ENCODE measurements at regions of chr6 and their contacts with region 1.

Region 1: DNA sequence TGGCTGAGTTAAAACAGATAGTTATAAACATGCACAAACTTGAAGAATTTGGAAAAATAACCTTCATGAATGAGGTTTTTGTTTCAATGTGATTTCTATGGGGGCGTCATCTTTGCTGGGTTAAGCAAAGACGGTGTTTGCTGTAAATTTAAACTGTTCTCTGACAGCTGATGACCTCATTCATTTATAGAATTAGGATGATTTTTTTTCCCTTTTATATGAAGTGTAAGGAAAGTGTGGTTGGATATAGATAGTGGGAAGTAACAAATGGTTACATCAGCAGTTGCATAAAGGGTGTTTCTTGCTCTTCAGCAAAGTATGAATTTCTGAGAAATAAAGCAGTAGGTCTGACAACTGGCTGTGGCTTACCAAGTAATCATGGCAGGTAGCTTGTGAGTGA is 137.2 kb upstream of the CENPW start:
- DNase-seq: no peak
- ATAC-seq: no peak
- H3K4me3 ChIP-seq: no peak overlapping the region
- H3K4me3 Mint-ChIP-seq: no peak overlapping the region
- H3K27ac ChIP-seq: no peak overlapping the region
- H3K27ac Mint-ChIP-seq: no peak overlapping the region
- H3K4me1 ChIP-seq: no peaks in the 10 kb centered on the region
- H3K4me1 Mint-ChIP-seq: no peaks in the 10 kb centered on the region
- H3K27me3 ChIP-seq: no peaks in the 10 kb centered on the region
- H3K27me3 Mint-ChIP-seq: no peaks in the 10 kb centered on the region
- CTCF ChIP-seq: no peak

Region 2: DNA sequence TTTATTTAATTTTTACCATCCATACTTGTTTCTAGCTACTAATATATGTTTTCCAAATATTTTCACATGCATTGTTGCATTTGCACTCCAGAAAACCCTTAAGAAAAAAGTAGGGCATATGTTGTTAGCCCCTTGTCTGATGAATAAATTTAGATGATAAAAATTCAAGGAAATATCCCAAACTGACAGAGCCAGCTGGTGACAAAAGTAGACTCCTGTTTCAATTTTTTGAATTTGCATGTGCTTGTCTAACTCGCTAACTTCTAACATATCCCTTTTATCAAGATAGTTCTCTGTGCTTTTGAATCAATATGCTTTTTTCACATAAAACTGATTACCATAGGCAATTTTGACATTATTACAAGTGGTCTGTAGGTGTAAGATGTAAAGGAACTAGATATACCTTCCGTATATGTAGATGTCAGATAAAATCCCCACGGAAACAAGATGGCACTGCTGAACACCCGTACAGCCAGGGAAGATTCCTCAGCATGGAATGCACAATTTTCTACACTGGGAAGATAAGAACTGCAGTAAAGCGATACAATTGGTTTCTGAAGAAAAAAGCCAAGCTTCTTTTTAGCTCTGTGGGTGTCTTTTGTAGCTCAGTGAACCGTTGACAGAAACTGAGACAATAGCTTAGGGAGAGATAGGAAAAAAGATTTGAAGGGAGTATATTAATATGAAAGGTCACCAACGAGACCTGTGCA is 1678.1 kb before region 1 on chr6:
- CTCF ChIA-PET with region 1: no interaction called
- POLR2A ChIA-PET with region 1: no interaction called
- intact Hi-C with region 1: no loop called
- DNase-seq: no peak
- ATAC-seq: no peak
- H3K4me3 ChIP-seq: no peak overlapping the region
- H3K4me3 Mint-ChIP-seq: no peak overlapping the region
- H3K27ac ChIP-seq: no peak overlapping the region
- H3K27ac Mint-ChIP-seq: no peak overlapping the region
- H3K4me1 ChIP-seq: no peaks in the 10 kb centered on the region
- H3K4me1 Mint-ChIP-seq: no peaks in the 10 kb centered on the region
- H3K27me3 ChIP-seq: no peaks in the 10 kb centered on the region
- H3K27me3 Mint-ChIP-seq: no peaks in the 10 kb centered on the region
- CTCF ChIP-seq: no peak

Region 3: DNA sequence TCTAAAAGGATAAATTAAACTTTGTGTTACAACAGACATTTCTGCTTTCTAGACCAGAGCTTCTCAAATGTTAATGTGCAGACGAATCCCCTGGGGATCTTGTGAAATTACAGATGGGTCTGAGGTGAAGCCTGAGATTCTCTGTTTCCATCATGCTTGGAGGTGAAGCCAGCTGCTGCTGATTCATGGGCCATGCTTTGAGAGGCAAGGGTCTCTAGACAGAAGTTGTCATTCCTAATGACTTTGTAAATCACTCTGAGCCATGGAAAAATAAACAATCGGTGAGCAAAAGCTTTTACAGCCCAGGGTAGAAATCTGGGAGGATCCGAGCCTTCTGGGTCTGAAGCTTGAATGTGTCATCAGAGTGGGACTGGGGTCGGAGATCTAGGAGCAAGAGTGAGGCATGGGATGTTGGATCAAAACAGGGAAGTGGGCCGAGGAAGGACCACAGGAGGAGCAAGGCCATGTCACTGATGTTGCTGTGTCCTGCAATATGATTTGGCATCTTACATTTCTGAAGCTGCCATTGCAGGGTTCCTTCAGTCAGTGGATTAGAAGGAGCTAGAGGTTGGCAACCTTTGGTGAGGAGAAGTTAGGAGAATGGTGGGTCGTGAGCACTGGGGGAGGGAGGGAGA is 139.1 kb before region 1 on chr6:
- CTCF ChIA-PET with region 1: no interaction called
- POLR2A ChIA-PET with region 1: no interaction called
- intact Hi-C with region 1: no loop called
- DNase-seq: no peak
- ATAC-seq: no peak
- H3K4me3 ChIP-seq: no peak overlapping the region
- H3K4me3 Mint-ChIP-seq: no peak overlapping the region
- H3K27ac ChIP-seq: no peak overlapping the region
- H3K27ac Mint-ChIP-seq: no peak overlapping the region
- H3K4me1 ChIP-seq: no peaks in the 10 kb centered on the region
- H3K4me1 Mint-ChIP-seq: no peaks in the 10 kb centered on the region
- H3K27me3 ChIP-seq: no peaks in the 10 kb centered on the region
- H3K27me3 Mint-ChIP-seq: no peaks in the 10 kb centered on the region
- CTCF ChIP-seq: no peak

Region 4: DNA sequence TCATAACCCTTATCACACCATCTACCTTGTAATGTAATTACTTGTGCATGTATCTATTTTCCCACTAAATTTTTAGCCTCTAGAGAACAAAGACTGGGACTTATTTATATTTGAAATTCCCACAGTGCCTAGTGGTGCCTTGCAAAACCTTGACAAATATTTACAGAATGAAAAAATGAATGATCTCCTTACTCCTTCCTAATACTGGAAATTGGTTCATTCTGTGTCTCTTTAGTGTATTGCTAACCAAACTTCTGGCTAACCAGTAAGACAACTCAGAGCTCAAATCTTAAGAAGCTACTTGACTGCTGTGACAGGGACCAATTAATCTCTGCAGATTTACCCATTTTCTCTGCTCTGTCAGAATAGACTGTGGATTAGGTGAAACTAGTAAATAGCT is 246.5 kb after region 1 on chr6:
- CTCF ChIA-PET with region 1: no interaction called
- POLR2A ChIA-PET with region 1: no interaction called
- intact Hi-C with region 1: loop called (anchors 2 kb)
- DNase-seq: no peak
- ATAC-seq: no peak
- H3K4me3 ChIP-seq: no peak overlapping the region
- H3K4me3 Mint-ChIP-seq: no peak overlapping the region
- H3K27ac ChIP-seq: no peak overlapping the region
- H3K27ac Mint-ChIP-seq: no peak overlapping the region
- H3K4me1 ChIP-seq: no peaks in the 10 kb centered on the region
- H3K4me1 Mint-ChIP-seq: no peaks in the 10 kb centered on the region
- H3K27me3 ChIP-seq: no peaks in the 10 kb centered on the region
- H3K27me3 Mint-ChIP-seq: no peaks in the 10 kb centered on the region
- CTCF ChIP-seq: no peak